Left colon (tissue), 2 donors: ENCODE measurements at regions of chr12 and their contacts with region 1.

Region 1: GRCh38 chr12:13864081-13864673 is 117.2 kb downstream of the GRIN2B start:
- DNase-seq: peak; percentile 74 to 86
- ATAC-seq: peak; percentile 96

Region 2: GRCh38 chr12:14167005-14167628 is 302.9 kb after region 1 on chr12:
- intact Hi-C with region 1: loop called in 1 of 2 experiments (anchors 5 kb)
- DNase-seq: peak in 1 of 2 donors; percentile 40
- ATAC-seq: peak; percentile 50